ENCODE measurements at regions of chrX and their contacts with region 1.

Region 1: GRCh38 chrX:78103623-78104446 is at the start of gene PGK1:
- DNase-seq: peak; percentile 98
- H3K4me3 ChIP-seq: peak within 1 kb of the TSS; percentile 57 to 82 (median 74)
- H3K27ac ChIP-seq: peak within 1 kb of the TSS; percentile 93 to 97 (median 95)
- H3K4me1 ChIP-seq: peaks cover 0 to 35% (median 29%) of the 10 kb centered on the region in 4 donors
- H3K27me3 ChIP-seq: no peaks in the 10 kb centered on the region
- CTCF ChIP-seq: no peak
- EP300 ChIP-seq: peak in 2 of 4 donors; percentile 17 to 67
- POLR2A ChIP-seq: peak; percentile 83 to 85
- total RNA-seq, gene PGK1: 92.8 to 101 (median 96.9) TPM

Region 2: GRCh38 chrX:77785486-77786364 is 318.1 kb before region 1 on chrX and contains the start of gene ATRX:
- intact Hi-C with region 1: loop called (anchors 10 kb)
- DNase-seq: peak; percentile 84
- H3K4me3 ChIP-seq: peak within 1 kb of the TSS; percentile 61 to 68 (median 62)
- H3K27ac ChIP-seq: peak within 1 kb of the TSS; percentile 84 to 92 (median 90)
- H3K4me1 ChIP-seq: peaks cover 0 to 8% (median 3%) of the 10 kb centered on the region in 4 donors
- H3K27me3 ChIP-seq: no peaks in the 10 kb centered on the region
- CTCF ChIP-seq: no peak
- EP300 ChIP-seq: no peak
- POLR2A ChIP-seq: peak in 1 of 2 donors; percentile 11
- total RNA-seq, gene ATRX: 102 to 142 (median 140) TPM

Region 3: DNA sequence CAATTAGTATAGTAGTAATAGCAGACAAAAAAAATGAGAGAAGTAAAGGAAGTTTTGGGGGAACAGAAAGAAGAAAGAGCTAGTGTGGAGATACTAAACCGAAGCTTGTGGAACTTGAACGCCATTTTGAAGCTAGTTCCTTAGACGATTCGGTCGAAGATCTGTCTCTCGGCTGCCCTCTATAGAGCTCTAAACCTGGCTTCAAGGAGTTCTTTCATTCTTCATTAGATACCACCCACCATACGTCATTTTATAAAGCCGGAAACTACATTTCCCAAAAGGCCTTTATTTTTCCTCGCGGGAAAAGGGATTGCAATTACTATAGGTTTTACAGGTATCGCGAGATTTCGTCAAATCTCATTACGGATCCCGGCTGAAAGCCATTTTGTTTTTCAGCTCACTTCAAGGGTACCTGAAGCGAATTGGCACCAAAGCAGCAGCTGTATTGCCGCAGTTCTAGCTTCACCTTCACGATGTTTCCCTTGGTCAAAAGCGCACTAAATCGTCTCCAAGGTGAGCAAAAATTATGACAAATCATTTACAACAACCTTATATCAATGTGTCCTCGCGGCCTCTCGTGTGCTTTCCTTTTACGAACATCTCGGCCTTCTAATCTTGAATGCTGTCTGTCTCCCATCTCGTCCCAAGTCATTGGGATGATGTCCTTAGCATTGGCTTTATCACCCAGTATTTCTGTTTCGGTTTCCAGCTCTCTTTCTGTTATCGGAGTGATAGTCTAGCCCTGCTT is 204.6 kb before region 1 on chrX and contains the start of gene COX7B:
- intact Hi-C with region 1: loop called (anchors 5 kb)
- DNase-seq: peak; percentile 86
- H3K4me3 ChIP-seq: peak within 1 kb of the TSS; percentile 46 to 61 (median 53)
- H3K27ac ChIP-seq: peak within 1 kb of the TSS; percentile 78 to 90 (median 88)
- H3K4me1 ChIP-seq: peaks cover 0 to 17% (median 1%) of the 10 kb centered on the region in 4 donors
- H3K27me3 ChIP-seq: no peaks in the 10 kb centered on the region
- CTCF ChIP-seq: peak in 1 of 4 experiments; percentile 29
- EP300 ChIP-seq: no peak
- POLR2A ChIP-seq: peak; percentile 55 to 67
- total RNA-seq, gene COX7B: 503 to 1,011 (median 854) TPM

Region 4: GRCh38 chrX:77910108-77910840 is 193.6 kb before region 1 on chrX and contains the start of gene ATP7A:
- intact Hi-C with region 1: loop called (anchors 2 kb)
- DNase-seq: peak; percentile 94
- H3K4me3 ChIP-seq: peak within 1 kb of the TSS; percentile 46 to 59 (median 56)
- H3K27ac ChIP-seq: peak within 1 kb of the TSS; percentile 76 to 87 (median 81)
- H3K4me1 ChIP-seq: peaks cover 0 to 6% (median 0%) of the 10 kb centered on the region in 4 donors
- H3K27me3 ChIP-seq: no peaks in the 10 kb centered on the region
- CTCF ChIP-seq: peak; percentile 29 to 47 (median 44)
- EP300 ChIP-seq: no peak
- POLR2A ChIP-seq: peak in 1 of 2 donors; percentile 29
- total RNA-seq, gene ATP7A: 9.0 to 10.5 (median 10.1) TPM

Region 5: DNA sequence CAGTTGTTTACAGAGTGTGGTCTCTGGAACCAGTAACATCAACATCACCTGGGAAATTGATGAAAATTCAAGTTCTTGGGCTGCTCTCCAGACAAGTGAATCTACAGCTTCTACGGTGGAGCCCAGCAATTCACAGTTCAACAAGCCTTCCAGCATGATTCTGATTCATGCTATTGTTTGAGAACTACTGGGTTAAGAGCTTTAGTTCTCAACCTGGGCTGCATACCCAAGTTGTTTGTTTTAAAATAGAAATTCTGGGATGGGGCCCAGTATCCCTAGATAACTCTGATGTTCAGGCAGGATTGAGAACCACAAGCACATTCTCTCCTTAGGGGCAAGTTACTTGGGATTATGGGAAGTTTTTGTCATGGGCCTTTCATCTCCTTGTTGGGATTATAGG is 37.7 kb before region 1 on chrX:
- intact Hi-C with region 1: no loop called
- DNase-seq: no peak
- H3K4me3 ChIP-seq: no peak overlapping the region
- H3K27ac ChIP-seq: peak overlapping the region in 1 of 4 donors; percentile 69
- H3K4me1 ChIP-seq: no peaks in the 10 kb centered on the region
- H3K27me3 ChIP-seq: no peaks in the 10 kb centered on the region
- CTCF ChIP-seq: no peak
- EP300 ChIP-seq: no peak
- POLR2A ChIP-seq: no peak

Region 6: GRCh38 chrX:78119521-78120227 is 15.8 kb after region 1 on chrX:
- intact Hi-C with region 1: no loop called
- DNase-seq: no peak
- H3K4me3 ChIP-seq: no peak overlapping the region
- H3K27ac ChIP-seq: no peak overlapping the region
- H3K4me1 ChIP-seq: no peaks in the 10 kb centered on the region
- H3K27me3 ChIP-seq: no peaks in the 10 kb centered on the region
- CTCF ChIP-seq: no peak
- EP300 ChIP-seq: no peak
- POLR2A ChIP-seq: no peak

Region 7: GRCh38 chrX:78139160-78140123 is 35.6 kb after region 1 on chrX and contains the start of gene TAF9B:
- intact Hi-C with region 1: loop called (anchors 2 kb)
- DNase-seq: peak; percentile 92
- H3K4me3 ChIP-seq: peak within 1 kb of the TSS; percentile 63 to 79 (median 68)
- H3K27ac ChIP-seq: peak within 1 kb of the TSS; percentile 81 to 91 (median 84)
- H3K4me1 ChIP-seq: no peaks in the 10 kb centered on the region
- H3K27me3 ChIP-seq: no peaks in the 10 kb centered on the region
- CTCF ChIP-seq: no peak
- EP300 ChIP-seq: no peak
- POLR2A ChIP-seq: no peak
- total RNA-seq, gene TAF9B: 34.1 to 48.9 (median 41.2) TPM

Measured in sigmoid colon (tissue), 7 donors.